MCF 10A (cell line): ENCODE measurements at regions of chr7 and their contacts with region 1.

Region 1: GRCh38 chr7:42924223-42924838 is 7.6 kb downstream of the PSMA2 start:
- DNase-seq: no peak
- H3K4me3 Mint-ChIP-seq: no peak overlapping the region
- H3K27ac Mint-ChIP-seq: no peak overlapping the region
- H3K4me1 Mint-ChIP-seq: peaks cover 31% of the 10 kb centered on the region
- H3K27me3 Mint-ChIP-seq: no peaks in the 10 kb centered on the region
- CTCF ChIP-seq: no peak

Region 2: GRCh38 chr7:42886129-42886528 is 38.2 kb before region 1 on chr7:
- CTCF ChIA-PET with region 1: no interaction called
- POLR2A ChIA-PET with region 1: no interaction called
- intact Hi-C with region 1: no loop called
- DNase-seq: peak; percentile 42
- H3K4me3 Mint-ChIP-seq: no peak overlapping the region
- H3K27ac Mint-ChIP-seq: no peak overlapping the region
- H3K4me1 Mint-ChIP-seq: peaks cover 9% of the 10 kb centered on the region
- H3K27me3 Mint-ChIP-seq: no peaks in the 10 kb centered on the region
- CTCF ChIP-seq: peak; percentile 56

Region 3: DNA sequence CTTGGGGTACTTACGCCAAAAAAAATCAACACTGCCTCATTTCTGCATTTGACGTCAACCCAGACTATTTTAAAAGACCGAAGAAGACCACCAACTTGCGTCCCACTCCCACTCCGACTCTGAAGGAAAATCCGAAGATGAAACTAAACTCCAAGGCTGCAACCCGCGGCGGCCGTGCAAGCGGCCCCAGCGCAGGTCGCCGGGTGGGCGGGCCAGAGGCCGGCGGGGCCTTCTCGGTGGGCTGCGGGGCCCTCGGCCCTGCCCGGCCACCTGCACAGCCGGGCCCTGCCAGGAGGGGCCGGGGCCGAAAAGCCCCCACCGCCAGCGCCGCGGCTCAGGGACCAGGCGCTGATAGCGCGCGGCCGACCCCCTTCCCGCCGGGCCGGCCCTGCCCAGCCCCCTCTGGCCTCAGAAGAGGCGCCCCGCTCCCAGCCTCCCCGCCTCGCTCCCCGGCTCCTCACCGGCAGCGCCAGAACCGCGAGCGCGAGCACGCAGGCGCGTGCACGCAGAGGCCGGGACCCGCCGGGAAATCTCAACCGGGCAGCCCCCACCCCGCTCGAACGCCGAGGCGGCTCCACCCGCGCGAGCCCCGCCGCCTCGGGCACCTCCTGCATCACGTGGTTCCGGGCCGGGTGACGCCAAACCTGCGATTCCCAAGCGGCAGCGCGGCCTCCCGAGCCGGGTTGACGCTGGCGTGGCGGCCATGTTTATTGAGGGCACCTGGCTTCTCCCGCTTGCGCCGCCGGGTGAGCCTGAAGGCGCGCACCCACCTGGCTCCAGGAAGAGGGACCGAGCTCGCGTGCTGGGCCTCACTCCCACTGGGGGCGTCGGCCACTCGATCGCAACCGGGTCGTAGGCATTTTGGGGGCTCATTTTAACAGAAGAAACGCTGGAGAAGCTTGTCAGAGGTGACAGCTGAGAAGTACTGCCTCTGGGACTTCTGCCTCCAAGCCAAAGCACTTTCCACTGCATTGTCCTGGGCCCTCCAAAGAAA is 12.6 kb before region 1 on chr7 and contains the start of gene C7orf25:
- CTCF ChIA-PET with region 1: interaction called, 5 read pairs
- POLR2A ChIA-PET with region 1: interaction called, 200 read pairs
- intact Hi-C with region 1: no loop called
- DNase-seq: peak; percentile 94
- H3K4me3 Mint-ChIP-seq: peak within 1 kb of the TSS; percentile 74
- H3K27ac Mint-ChIP-seq: peak within 1 kb of the TSS; percentile 79
- H3K4me1 Mint-ChIP-seq: peaks cover 55% of the 10 kb centered on the region
- H3K27me3 Mint-ChIP-seq: no peaks in the 10 kb centered on the region
- CTCF ChIP-seq: no peak
- total RNA-seq, gene C7orf25: 4.4 and 5.4 TPM in 2 replicates